ENCODE measurements at regions of chr11 and their contacts with region 1.

Region 1: DNA sequence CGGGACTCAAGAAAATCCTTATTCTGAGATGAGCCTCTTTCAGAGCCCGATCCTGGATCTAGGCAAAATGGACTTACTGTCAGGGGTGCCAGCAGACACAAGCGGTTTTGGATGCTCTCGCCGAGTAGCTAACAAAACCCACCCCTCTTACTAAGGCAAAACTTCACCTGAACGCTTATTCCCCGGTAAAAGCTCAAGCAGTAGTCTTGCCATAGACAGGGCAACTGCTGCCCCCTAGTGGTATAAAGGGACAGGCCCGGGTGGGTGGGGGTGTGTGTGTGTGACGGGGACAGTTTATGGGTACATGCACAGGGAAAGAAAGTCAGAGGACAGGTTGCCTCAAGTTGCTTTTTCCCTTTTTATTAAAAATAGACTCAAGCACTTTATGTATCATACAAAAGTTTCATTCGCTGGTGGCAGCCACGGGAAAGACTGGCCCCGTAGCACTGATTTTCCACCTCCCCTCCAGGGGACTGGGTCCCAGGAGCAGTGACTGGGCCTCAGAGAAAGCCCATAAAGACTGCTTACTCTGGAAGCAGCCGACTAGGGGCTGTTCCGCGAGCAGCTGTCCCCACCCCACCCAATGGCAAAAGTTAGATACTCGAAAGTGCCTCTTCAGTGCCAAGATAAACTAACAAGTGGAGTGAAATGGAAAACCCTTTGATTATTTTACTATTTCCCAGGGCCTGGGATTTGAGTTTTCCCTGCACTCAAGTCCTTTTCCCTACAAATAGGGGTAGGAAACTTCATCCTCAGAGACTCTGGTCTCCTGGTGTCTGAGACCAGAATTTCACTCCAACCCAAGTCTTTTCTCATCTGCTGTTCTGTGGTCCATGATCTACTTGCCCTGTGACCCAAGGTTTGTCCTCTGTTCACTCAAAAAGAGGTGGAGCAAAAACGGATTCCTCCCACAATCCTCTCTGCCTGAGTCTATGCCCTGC is 4.7 kb downstream of the YPEL4 start:
- DNase-seq: peak; percentile 73 to 95 (median 87)

Region 2: DNA sequence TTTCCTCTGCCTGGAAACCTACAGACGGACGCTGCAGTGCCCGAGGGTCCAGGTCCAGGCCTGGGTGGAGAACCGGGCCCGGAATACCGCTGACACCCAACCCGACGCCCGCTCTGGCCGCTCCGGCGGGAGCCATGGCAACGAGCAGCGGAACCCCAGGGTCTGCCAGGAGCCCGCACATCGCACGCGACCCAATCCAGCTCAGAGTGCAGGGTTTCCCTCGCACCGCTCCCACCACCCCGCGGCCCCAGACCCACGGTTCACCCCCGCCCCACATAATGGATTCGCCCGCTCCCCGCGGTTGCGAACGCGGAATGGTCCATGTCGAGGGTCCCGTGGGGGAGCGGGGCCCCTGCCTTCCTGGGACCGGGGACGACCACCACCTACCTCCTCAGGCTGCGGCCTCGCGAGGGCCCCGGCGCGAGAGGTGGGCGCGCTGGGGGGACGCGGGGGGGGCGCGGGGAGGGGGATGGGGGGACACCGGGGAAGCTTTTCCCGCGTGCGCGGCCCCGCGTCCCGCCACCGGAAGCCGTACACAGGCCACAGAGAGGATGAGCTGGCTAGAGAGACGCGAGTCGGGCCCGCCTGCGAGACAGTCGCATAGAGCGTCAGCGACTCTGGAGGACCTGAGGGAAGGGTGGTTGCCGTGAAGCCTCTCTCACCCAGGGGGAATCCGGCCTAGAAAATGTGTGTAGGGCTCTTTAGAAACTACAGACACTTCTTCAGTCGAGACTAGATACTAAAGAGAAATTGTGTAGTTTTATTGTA is 309.5 kb before region 1 on chr11 and contains the start of gene SSRP1:
- intact Hi-C with region 1: loop called (anchors 5 kb)
- DNase-seq: peak; percentile 85 to 97 (median 93)

Region 3: GRCh38 chr11:57379732-57380131 is 265.3 kb before region 1 on chr11:
- intact Hi-C with region 1: no loop called
- DNase-seq: no peak